GM13977 (cell line): ENCODE measurements at regions of chr7 and their contacts with region 1.

Region 1: DNA sequence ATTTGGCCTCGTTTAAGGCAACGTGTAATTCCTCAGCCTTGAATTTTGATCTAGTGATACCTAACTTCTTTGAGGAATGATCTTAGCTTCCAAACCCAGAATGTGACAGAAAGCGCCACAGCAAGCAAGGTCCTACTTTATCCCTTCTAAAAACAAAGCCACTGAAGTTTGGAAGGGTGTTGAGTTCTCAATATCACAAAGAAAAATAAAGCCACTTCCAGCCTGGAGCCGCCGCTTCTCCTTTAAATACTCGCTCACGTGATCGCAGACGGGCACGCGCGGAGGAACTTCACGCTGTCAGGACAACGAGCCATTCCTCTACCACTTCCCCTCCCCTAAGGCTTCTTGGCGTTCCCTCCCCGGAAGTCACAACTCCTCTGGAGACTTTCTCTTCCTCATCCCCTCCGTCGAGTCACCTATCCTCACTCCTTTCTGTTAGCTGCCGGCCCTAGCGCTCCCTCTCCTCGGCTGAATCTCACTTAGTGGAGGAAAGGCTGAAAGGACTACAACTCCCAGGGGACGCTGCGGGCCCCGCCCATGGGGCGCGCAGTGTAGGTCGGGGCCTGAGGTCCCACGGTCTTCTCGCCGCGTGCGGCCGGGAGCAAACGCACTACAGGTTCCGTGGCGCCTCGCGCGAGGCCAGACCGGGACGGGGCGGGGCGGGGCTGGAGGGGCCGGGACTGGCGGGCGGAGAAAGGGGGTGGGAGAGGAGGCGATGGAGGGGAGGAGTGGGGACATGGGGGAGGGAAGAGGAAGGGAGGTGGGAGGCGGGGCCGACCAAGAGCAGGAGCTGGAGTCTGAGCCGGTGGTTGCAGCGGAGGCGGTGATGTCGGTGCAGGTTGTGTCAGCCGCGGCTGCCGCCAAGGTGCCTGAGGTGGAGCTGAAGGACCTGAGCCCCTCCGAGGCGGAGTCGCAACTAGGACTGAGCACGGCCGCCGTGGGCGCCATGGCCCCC is at the start of gene AHCYL2:
- DNase-seq: peak; percentile 94
- CTCF ChIP-seq: no peak

Region 2: DNA sequence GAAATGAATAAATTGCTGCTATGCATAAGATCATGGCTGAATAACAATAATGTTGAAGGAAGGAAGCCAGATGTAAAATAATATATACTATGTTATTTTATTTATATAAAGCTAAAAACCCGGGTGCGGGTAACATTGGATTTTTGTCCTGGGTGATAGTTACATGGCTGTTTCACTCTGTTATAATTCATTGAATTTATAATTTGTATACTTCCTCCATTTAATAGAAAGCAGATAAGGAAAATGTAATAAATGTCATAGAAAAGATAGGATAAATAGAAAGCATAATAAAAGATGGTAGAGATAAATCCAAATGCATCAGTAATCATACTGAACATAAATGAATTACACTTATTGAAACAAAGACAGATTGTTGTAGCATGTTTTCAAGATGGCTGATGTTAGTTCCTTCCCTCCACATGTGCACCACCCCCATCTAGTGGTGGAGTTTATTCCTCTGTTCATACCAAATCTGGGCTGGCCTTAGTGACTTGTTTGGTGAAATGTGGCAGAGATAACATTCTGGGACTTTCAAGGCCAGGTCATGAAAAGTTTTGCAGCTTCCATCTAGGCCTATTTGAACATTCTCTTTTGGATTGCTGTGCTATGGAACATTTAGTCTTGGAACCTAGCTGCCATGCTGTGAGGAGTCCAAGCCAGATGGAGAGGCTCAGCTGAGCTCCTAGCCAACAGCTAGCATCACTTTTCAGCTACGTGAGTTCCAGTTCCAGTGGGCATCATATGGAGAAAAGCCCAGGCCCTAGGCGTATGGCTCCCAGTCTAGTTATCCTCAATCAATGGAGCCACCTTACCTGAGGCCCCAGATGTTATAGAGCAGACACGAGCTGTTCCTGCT is 47.2 kb after region 1 on chr7:
- in situ Hi-C with region 1: loop called (anchors 10 kb)
- DNase-seq: peak; percentile 56
- CTCF ChIP-seq: peak; percentile 65

Region 3: GRCh38 chr7:129298268-129298893 is 73.9 kb after region 1 on chr7:
- in situ Hi-C with region 1: no loop called
- DNase-seq: peak; percentile 62
- CTCF ChIP-seq: peak; percentile 78

Region 4: GRCh38 chr7:129317450-129317849 is 92.9 kb after region 1 on chr7:
- in situ Hi-C with region 1: no loop called
- DNase-seq: no peak
- CTCF ChIP-seq: no peak

Region 5: GRCh38 chr7:129468087-129468486 is 243.6 kb after region 1 on chr7:
- in situ Hi-C with region 1: loop called (anchors 25 kb)
- DNase-seq: no peak
- CTCF ChIP-seq: no peak